ENCODE measurements at regions of chr3 and their contacts with region 1.

Region 1: GRCh38 chr3:120095226-120095978 is 1.2 kb upstream of the GSK3B start:
- DNase-seq: peak; percentile 93 to 96
- ATAC-seq: peak; percentile 82
- H3K4me3 ChIP-seq: peak overlapping the region; percentile 79
- H3K27ac ChIP-seq: peak overlapping the region; percentile 98
- H3K4me1 ChIP-seq: no peaks in the 10 kb centered on the region
- H3K27me3 ChIP-seq: no peaks in the 10 kb centered on the region

Region 2: DNA sequence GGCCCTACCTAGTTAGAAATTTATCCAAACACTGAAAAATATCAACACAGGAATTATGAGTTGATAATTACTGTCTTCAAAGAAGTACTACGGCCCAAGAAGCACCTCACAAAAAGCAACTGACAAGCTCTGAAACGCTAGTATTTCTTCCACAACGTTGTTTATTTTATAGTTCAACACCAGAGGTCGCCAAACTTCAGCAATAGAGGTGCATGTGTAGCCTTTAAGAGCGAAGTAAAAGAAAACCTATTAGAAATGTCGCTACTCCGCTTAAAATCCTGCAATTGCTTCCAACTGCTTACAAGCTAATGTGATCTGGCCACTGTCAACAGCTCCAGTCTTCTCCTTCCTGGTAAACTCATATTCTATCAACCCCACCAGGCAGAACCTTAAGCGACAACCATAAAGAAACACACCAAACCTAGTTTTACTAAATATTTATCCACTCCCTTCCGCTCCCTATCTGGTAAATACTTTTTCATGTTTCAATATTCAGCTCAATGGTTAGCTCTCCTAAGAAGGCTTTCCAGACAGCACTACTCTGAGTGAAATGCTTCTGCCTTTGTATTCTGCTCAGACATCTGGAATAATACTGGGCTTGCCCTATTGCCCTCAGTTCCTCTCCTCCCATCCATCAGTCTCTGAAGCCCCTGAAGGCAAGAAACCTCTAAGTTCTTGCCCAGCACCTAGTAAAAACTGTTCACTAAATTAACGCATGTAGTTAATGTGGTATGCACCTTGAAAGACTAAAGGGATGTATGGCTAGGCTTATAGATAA is 203.3 kb before region 1 on chr3:
- intact Hi-C with region 1: loop called (anchors 5 to 10 kb)
- DNase-seq: no peak
- ATAC-seq: peak; percentile 80
- H3K4me3 ChIP-seq: no peak overlapping the region
- H3K27ac ChIP-seq: no peak overlapping the region
- H3K4me1 ChIP-seq: no peaks in the 10 kb centered on the region
- H3K27me3 ChIP-seq: no peaks in the 10 kb centered on the region

Region 3: DNA sequence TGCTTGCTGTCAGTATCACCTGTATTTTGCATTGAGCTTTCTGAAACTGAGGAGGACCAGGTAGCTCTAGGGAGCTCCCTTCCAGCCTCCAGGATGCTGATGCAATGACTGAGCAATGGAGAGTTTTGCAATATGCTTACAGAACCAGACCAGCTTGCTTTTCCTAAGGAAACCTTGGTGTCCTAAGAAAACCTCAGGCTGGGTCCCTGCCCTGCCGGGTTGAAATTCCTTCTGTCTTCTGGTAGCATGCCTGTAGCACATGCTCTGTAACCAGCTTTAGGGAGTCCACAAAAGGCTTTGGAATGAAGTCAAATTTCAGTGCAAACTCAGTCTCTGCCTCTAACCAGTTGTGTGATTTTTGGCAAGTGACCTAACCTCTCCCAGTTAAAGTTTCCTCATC is 64.6 kb after region 1 on chr3:
- intact Hi-C with region 1: loop called in 1 of 2 experiments (anchors 5 kb)
- DNase-seq: peak in 1 of 2 donors; percentile 78
- ATAC-seq: peak; percentile 92
- H3K4me3 ChIP-seq: no peak overlapping the region
- H3K27ac ChIP-seq: peak overlapping the region in 1 of 2 donors; percentile 79
- H3K4me1 ChIP-seq: peaks cover 2 to 3% of the 10 kb centered on the region in 2 donors
- H3K27me3 ChIP-seq: no peaks in the 10 kb centered on the region

Region 4: DNA sequence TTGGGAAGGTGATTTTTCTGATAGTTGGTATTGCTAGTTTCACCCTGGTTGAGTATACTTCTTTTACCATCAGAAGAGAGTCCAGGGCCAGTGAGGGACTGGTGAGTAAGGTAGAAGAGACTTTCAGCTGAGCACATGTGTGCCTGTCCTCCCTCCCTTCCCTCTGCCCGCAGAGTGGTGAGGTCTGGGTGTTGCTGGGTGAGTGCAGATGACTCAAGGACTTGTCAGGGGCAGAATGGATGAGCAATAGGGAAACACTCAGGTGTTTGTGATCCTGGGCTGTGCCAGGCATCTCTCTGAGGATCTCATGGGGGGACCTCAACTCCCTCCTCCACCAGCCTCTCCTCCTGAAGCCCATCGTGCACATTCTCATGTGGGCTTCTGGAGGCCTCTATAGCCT is 74.8 kb after region 1 on chr3:
- intact Hi-C with region 1: loop called in 1 of 2 experiments (anchors 5 kb)
- DNase-seq: no peak
- ATAC-seq: no peak
- H3K4me3 ChIP-seq: no peak overlapping the region
- H3K27ac ChIP-seq: no peak overlapping the region
- H3K4me1 ChIP-seq: peaks cover 0 to 3% of the 10 kb centered on the region in 2 donors
- H3K27me3 ChIP-seq: no peaks in the 10 kb centered on the region

Region 5: GRCh38 chr3:120348981-120349818 is 253.8 kb after region 1 on chr3 and contains the start of gene LRRC58:
- intact Hi-C with region 1: loop called in 1 of 2 experiments (anchors 10 kb)
- DNase-seq: peak; percentile 95 to 97
- ATAC-seq: peak; percentile 97
- H3K4me3 ChIP-seq: peak within 1 kb of the TSS; percentile 44 to 51
- H3K27ac ChIP-seq: peak within 1 kb of the TSS; percentile 64 to 68
- H3K4me1 ChIP-seq: no peaks in the 10 kb centered on the region
- H3K27me3 ChIP-seq: no peaks in the 10 kb centered on the region
- total RNA-seq, gene LRRC58: 18.0 to 19.2 TPM

Region 6: DNA sequence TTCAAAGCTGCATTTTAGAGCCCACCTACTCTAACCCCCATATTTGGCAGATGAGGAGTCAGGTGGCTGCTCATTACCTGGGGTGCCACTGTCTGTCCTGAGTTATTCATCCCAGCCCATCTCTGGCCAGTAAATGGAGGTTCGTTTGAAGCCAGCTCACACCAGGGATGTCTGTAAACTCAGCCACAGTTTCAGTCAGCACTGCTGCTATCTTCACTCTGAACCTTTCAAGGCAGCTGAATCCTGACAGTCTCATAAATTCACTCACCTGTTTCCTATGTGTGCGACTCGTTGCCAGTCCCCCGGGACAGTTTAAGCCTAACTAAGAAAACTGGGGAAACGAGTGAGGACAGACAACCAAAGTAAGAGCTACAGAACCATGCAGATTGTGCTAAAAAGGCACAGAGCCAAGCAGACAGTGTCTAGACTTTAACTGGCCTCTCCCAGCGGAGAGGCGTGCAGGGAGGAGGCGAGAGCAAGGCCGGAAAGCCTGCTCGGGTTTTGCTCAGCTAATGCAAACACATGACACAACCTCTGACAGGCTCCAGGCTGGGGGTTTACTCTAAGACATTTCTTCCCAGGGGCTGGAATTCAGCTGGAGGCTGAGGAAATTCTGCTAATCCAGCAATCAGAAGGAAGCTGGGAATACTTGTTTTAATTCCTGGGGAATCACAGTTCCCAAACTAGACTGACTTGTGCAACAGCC is 343.4 kb after region 1 on chr3:
- intact Hi-C with region 1: loop called in 1 of 2 experiments (anchors 10 kb)
- DNase-seq: peak; percentile 82 to 87
- ATAC-seq: peak; percentile 88
- H3K4me3 ChIP-seq: no peak overlapping the region
- H3K27ac ChIP-seq: peak overlapping the region; percentile 68 to 95
- H3K4me1 ChIP-seq: peaks cover 10 to 31% of the 10 kb centered on the region in 2 donors
- H3K27me3 ChIP-seq: no peaks in the 10 kb centered on the region

Measured in aorta (tissue), 5 donors.